Activated CD4-positive, alpha-beta memory T cell treated with anti-CD3 and anti-CD28 coated beads, Interleukin-2, amount 10 ng/mL, durations not matched to agents 7 days and 5 days (primary cell): ENCODE measurements at regions of chr1 and their contacts with region 1.

Region 1: DNA sequence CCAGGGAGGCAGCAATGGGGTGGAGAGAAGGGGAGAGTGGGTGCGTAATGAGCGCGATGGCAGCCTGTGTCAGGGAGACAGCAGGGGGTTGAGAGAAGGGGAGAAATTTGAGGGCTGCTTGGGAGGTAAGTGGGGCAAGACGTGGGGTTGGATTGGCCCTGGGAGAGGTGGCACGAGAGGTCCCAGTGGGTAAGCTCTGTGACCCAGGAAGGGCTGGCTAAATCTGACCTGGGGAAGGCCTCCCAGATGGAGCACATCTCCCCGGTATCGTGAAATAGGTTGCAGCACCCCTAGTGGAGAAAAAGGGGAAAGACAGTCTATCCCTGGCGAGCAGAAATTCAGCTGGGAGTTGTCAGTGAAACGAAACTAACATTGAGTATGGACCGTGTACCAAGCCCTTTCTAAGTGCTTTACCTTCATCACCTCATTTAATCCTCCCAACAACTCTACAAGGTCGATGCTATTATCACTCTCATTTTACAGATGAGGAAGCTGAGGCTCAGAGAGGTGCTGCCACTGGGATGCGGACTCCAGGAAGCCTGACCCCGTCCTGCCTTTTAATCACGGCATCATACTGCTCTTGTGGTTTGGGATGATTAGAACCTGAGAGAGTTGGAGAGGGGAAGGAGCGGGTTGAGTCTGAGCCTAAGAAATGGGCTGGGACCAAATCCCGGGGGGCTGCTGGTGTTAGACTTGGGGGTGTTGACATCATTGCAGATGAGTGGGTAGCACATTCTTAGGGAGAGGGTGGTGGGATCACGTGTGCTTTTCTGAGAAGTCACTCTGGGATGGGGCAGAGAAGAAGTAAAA is 56.6 kb upstream of the RPL11 start:
- DNase-seq: peak; percentile 66
- H3K4me3 Mint-ChIP-seq: peak overlapping the region; percentile 53
- H3K27ac Mint-ChIP-seq: peak overlapping the region; percentile 22
- H3K4me1 Mint-ChIP-seq: peaks cover 25% of the 10 kb centered on the region
- H3K27me3 Mint-ChIP-seq: peaks cover 6% of the 10 kb centered on the region

Region 2: DNA sequence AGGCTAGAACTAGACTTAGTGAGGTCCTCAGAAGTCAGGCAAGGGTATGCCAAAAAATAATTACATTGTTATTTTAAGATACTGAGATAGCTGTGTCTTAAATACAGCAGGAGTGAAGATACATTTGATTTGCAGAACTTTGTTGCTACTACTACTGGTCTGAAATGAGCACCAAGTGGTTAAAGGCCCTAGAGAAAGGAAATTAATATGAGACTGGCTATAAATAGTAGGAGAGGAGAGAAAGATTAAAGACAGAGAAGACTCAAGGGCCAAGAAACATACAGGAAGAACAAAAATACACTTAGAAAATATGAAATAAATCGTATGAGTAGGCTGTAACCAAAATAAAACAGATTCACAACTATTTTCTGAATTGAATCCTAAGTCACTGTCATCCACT is 312.3 kb before region 1 on chr1:
- CTCF ChIA-PET with region 1: no interaction called
- POLR2A ChIA-PET with region 1: no interaction called
- DNase-seq: no peak
- H3K4me3 Mint-ChIP-seq: no peak overlapping the region
- H3K27ac Mint-ChIP-seq: no peak overlapping the region
- H3K4me1 Mint-ChIP-seq: peaks cover 22% of the 10 kb centered on the region
- H3K27me3 Mint-ChIP-seq: no peaks in the 10 kb centered on the region

Region 3: GRCh38 chr1:23394684-23395083 is 240.4 kb before region 1 on chr1:
- CTCF ChIA-PET with region 1: no interaction called
- POLR2A ChIA-PET with region 1: no interaction called
- DNase-seq: no peak
- H3K4me3 Mint-ChIP-seq: no peak overlapping the region
- H3K27ac Mint-ChIP-seq: no peak overlapping the region
- H3K4me1 Mint-ChIP-seq: peaks cover 14% of the 10 kb centered on the region
- H3K27me3 Mint-ChIP-seq: no peaks in the 10 kb centered on the region

Region 4: GRCh38 chr1:23530747-23531561 is 104.1 kb before region 1 on chr1 and contains the start of gene E2F2:
- CTCF ChIA-PET with region 1: interaction called, 19 read pairs
- POLR2A ChIA-PET with region 1: interaction called, 5 read pairs
- DNase-seq: peak; percentile 88
- H3K4me3 Mint-ChIP-seq: peak within 1 kb of the TSS; percentile 99
- H3K27ac Mint-ChIP-seq: peak within 1 kb of the TSS; percentile 97
- H3K4me1 Mint-ChIP-seq: peaks cover 72% of the 10 kb centered on the region
- H3K27me3 Mint-ChIP-seq: peaks cover 2% of the 10 kb centered on the region
- total RNA-seq, gene E2F2: 93.4 to 98.9 TPM

Region 5: GRCh38 chr1:23577056-23578004 is 57.7 kb before region 1 on chr1:
- CTCF ChIA-PET with region 1: interaction called, 28 read pairs
- POLR2A ChIA-PET with region 1: interaction called, 3 read pairs
- DNase-seq: peak; percentile 51
- H3K4me3 Mint-ChIP-seq: no peak overlapping the region
- H3K27ac Mint-ChIP-seq: peak overlapping the region; percentile 69
- H3K4me1 Mint-ChIP-seq: peaks cover 23% of the 10 kb centered on the region
- H3K27me3 Mint-ChIP-seq: peaks cover 12% of the 10 kb centered on the region

Region 6: DNA sequence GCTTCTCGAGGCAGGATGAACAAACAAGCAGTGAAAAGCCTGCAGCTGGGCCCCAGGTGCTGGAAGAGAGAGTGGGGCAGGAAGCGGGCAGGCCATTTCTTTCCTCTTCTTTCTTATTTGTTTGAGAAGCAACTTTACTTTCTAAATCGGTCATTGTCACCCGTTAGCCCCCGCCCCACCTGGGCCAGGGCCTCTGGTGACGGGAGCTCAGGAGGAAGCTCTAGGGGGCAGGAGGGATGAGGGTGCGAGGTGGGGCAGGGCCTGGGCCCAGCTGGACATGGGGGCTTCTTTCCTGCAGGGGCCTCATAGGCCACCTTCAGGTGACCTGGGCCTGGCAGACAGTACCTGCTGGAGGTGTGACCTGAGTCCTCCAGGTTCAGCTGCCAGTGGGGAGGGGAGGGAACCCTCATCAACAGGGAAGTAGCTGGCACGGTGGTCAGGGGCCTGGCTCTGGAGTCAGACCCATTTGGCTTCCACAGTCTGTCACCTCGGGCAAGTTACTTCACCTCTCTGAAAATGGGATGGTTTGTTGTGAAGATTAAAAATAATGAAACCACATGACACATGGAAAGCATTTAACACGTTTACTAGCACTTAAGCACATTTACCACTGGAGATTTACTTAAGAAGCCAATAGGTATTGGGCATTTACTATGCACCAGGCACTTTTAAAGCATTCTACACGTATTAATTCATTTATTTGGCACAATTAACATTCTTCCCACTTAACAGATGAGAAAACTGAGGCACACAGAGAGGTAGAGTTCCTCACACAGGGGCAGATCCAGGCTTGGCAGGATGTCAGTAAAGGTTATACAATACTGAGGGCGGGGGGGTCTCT is 21.6 kb before region 1 on chr1:
- CTCF ChIA-PET with region 1: interaction called, 43 read pairs
- POLR2A ChIA-PET with region 1: interaction called, 7 read pairs
- DNase-seq: peak; percentile 70
- H3K4me3 Mint-ChIP-seq: peak overlapping the region; percentile 2
- H3K27ac Mint-ChIP-seq: peak overlapping the region; percentile 82
- H3K4me1 Mint-ChIP-seq: peaks cover 61% of the 10 kb centered on the region
- H3K27me3 Mint-ChIP-seq: peaks cover 4% of the 10 kb centered on the region

Region 7: DNA sequence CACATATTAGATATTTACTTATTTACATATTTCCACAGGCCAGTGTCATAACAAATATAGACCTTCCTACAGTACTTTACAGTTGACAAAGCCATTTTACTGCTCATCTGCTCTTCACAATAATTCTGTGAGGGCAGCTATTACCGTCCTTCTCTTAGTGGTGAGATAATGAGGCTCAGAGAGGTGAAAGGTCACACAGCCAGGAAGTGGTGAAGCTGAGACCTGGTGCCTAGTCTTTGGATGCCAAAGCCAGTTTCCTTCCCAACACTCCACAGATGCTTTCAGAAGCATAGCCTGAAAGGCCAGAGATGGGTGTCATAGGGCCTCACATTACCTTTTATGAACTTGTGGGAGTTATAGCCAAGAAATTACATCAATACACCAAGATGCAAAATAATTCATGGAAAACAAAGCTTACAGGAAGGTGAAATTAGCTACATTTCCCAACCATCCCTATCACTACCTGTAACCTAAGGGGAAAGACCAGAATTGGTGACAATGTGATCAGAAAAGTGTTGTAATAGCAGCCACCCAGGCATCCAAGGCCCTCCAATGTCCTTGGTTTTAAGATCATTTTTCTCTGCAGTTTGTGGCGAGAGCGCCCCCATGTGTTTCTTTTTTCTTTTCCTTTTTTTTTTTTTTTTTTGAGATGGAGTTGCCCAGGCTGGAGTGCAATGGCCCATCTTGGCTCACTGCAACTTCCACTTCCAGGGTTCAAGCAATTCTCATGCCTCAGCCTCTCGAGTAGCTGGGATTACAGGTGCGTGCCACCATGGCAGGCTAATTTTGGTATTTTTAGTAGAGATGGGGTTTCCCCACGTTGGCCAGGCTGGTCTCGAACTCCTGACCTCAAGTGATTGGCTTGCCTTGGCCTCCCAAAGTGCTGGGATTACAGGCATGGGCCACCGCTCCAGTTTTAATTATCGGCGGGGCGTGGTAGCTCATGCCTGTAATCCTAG is 30.1 kb after region 1 on chr1:
- CTCF ChIA-PET with region 1: interaction called, 19 read pairs
- POLR2A ChIA-PET with region 1: no interaction called
- DNase-seq: peak; percentile 26
- H3K4me3 Mint-ChIP-seq: no peak overlapping the region
- H3K27ac Mint-ChIP-seq: peak overlapping the region; percentile 51
- H3K4me1 Mint-ChIP-seq: peaks cover 10% of the 10 kb centered on the region
- H3K27me3 Mint-ChIP-seq: peaks cover 2% of the 10 kb centered on the region